CD8-positive, alpha-beta T cell (primary cell): ENCODE measurements at regions of chr3 and their contacts with region 1.

Region 1: DNA sequence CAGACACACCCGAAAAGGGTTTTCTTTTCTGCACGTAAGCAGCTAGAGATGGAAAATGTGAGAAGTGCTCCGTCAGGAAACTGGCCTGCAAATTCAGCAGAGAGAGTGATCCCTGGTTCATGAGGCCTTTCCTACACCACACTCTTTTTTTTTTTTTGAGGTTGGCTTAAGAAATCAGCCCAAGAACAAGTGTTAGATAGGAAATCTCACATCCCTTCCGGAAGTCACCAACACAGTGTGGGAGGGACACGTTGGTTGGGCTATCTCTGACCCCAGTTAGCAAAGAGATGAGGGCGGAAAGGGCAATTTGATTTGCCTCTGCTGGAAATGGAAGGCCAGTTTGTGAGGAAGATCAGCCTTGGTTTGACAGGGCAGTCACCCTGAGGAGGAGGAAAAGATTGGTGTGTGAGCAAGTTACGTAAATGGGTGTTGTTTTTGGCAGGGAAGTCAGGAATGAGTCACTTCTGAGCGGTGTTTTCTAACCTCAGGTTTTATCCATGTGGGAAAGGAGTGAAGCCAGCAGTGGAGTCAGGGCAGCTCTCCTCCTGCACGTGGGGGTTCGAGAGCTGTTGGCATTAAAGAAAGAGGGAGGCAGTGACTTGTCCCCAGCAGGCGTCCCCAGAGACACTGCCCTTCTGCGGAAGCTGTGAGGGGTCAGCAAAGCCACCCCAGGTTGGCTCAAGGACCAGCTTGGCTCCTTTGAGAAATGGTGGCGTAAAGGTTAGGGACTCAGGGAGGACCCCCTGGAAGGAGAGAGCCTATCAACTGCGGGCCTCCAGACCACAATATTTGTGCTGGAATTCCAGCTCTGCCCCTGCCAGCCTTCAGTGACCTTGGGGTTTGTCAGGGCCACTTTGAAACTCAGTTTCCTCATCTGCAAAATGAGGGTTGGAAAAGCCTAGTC is 237.6 kb upstream of the BHLHE40 start:
- DNase-seq: peak in 1 of 9 experiments; percentile 44
- ATAC-seq: no peak
- H3K4me3 ChIP-seq: no peak overlapping the region
- H3K4me3 Mint-ChIP-seq: peak overlapping the region; percentile 49
- H3K27ac ChIP-seq: peak overlapping the region in 1 of 2 experiments; percentile 67
- H3K27ac Mint-ChIP-seq: peak overlapping the region; percentile 83
- H3K4me1 ChIP-seq: peaks cover 52% of the 10 kb centered on the region
- H3K4me1 Mint-ChIP-seq: peaks cover 50% of the 10 kb centered on the region
- H3K27me3 ChIP-seq: no peaks in the 10 kb centered on the region
- H3K27me3 Mint-ChIP-seq: no peaks in the 10 kb centered on the region
- CTCF ChIP-seq: no peak

Region 2: DNA sequence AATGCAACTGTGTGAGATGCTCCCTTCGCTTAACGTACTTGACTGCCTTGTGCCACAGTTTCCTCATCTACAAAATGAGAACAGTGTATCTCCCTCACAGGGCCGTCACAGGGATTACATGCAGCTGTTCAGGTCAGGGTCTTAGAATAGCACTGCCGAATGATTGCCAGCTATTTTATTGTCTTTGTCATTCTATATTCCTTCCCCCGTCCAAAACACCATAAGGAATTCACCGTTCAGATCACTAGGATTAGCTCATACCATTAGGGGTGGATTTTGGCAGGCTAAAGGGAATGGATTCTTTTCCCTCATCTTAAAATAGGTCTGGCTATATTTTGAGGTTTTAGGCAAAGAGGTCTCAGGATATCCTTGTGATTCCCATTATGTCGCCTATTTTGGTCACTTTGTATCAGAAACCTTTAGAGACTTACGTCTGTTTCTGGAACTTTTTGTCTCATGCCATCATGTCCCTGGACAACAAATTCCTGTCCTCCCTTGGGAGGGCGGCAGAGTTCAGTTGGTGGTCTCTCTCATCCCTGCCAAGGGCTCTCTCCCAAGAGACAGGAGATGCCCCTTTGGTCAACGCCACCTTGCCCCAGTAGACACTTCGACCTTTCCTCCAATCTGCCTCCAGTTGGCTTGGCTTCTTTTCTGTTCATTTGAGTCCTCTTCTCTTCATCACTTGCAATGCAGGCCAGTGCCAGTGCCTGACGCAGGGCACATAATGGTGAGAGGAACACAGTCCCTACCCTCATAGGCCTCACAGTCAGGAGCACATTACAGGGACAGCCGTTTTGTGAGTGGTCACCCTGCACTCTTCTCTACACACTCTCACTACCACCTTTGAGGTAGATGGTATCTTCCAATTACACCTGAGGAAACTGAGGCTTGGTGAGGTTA is 66.0 kb after region 1 on chr3:
- CTCF ChIA-PET with region 1: no interaction called
- POLR2A ChIA-PET with region 1: no interaction called
- intact Hi-C with region 1: loop called in 1 of 2 experiments (anchors 10 kb)
- DNase-seq: no peak
- ATAC-seq: no peak
- H3K4me3 ChIP-seq: no peak overlapping the region
- H3K4me3 Mint-ChIP-seq: no peak overlapping the region
- H3K27ac ChIP-seq: no peak overlapping the region
- H3K27ac Mint-ChIP-seq: no peak overlapping the region
- H3K4me1 ChIP-seq: no peaks in the 10 kb centered on the region
- H3K4me1 Mint-ChIP-seq: peaks cover 6% of the 10 kb centered on the region
- H3K27me3 ChIP-seq: no peaks in the 10 kb centered on the region
- H3K27me3 Mint-ChIP-seq: no peaks in the 10 kb centered on the region
- CTCF ChIP-seq: no peak

Region 3: DNA sequence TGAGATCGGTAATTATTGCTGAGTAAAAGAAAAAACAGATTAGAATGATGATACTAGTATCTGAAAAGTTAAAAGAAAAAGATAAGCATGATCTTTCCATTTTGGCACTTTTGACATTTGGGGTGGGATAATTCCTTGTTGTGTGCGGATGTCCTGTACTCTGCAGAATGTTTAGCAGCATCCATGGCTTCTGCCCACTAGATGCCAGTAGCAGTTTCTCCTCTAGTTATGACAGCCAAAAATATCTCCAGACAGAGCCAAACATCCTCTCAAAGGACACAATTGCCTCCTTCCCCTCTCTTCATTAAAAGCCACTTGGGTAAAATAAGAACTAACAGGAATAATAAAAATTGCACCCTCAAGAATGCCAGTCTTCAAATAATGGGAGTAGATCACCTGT is 1650.5 kb after region 1 on chr3:
- CTCF ChIA-PET with region 1: no interaction called
- POLR2A ChIA-PET with region 1: no interaction called
- intact Hi-C with region 1: no loop called
- DNase-seq: no peak
- ATAC-seq: no peak
- H3K4me3 ChIP-seq: no peak overlapping the region
- H3K4me3 Mint-ChIP-seq: no peak overlapping the region
- H3K27ac ChIP-seq: no peak overlapping the region
- H3K27ac Mint-ChIP-seq: no peak overlapping the region
- H3K4me1 ChIP-seq: no peaks in the 10 kb centered on the region
- H3K4me1 Mint-ChIP-seq: no peaks in the 10 kb centered on the region
- H3K27me3 ChIP-seq: no peaks in the 10 kb centered on the region
- H3K27me3 Mint-ChIP-seq: no peaks in the 10 kb centered on the region
- CTCF ChIP-seq: no peak